Activated CD8-positive, alpha-beta T cell treated with anti-CD3 and anti-CD28 coated beads, Interleukin-2, amount 10 ng/mL, durations not matched to agents 7 days and 5 days (primary cell): ENCODE measurements at regions of chr5 and their contacts with region 1.

Region 1: GRCh38 chr5:138464008-138464387 is 1.3 kb upstream of the EGR1 start:
- DNase-seq: peak; percentile 93
- ATAC-seq: peak; percentile 52
- H3K4me3 Mint-ChIP-seq: peak overlapping the region; percentile 87
- H3K27ac Mint-ChIP-seq: peak overlapping the region; percentile 96
- H3K4me1 Mint-ChIP-seq: peaks cover 42% of the 10 kb centered on the region
- H3K27me3 Mint-ChIP-seq: peaks cover 20% of the 10 kb centered on the region

Region 2: GRCh38 chr5:138449501-138450239 is 14.3 kb before region 1 on chr5:
- CTCF ChIA-PET with region 1: interaction called, 25 read pairs
- POLR2A ChIA-PET with region 1: interaction called, 32 read pairs
- DNase-seq: peak; percentile 83
- ATAC-seq: peak; percentile 95
- H3K4me3 Mint-ChIP-seq: peak overlapping the region; percentile 31
- H3K27ac Mint-ChIP-seq: no peak overlapping the region
- H3K4me1 Mint-ChIP-seq: peaks cover 5% of the 10 kb centered on the region
- H3K27me3 Mint-ChIP-seq: peaks cover 2% of the 10 kb centered on the region

Region 3: DNA sequence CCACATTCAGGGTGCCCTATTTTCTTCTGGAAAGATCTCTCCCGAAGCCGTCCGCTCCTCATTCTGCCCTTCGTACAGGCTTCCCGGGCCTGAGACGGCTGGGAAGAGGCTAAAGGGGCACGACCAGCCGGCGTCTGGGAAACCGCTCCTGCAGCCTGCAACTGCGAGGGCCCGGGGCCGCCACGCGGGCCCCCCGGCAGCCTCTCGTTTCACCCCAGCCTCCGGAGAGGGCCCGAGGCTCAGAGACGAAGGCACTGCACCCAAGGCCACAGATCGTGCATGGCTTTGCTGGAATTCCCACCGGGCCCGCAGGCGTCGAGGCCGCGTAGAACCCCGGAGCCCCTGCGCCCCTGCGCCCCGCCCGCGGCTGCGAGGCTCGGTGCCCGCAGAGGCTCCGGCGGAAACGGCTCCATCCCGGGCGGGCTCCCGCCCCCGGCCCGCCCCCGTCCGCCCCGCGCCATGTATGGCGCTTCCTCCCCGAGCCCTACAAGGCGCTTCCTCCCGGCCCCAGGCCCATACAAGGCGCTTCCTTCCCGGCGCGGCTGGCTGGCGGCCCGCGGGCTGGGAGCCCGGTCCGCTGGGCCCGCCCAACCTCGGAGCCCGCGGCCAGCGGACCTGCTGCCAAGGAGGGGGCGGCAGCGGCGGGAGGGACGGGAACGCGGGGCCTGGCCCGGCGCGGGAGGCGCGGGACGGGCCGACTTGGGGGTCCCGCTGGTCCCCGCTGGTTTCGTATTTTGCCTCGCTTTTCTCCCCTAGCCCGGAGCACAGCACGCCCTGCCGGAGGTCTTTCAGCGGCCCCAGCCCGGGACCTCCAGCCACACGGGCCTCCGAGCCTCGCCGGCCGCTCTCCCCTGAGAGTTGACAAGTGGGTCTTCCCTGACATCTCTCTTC is 27.9 kb after region 1 on chr5:
- CTCF ChIA-PET with region 1: interaction called, 7 read pairs
- POLR2A ChIA-PET with region 1: interaction called, 12 read pairs
- DNase-seq: peak; percentile 89
- ATAC-seq: peak; percentile 100
- H3K4me3 Mint-ChIP-seq: peak overlapping the region; percentile 80
- H3K27ac Mint-ChIP-seq: peak overlapping the region; percentile 70
- H3K4me1 Mint-ChIP-seq: peaks cover 11% of the 10 kb centered on the region
- H3K27me3 Mint-ChIP-seq: peaks cover 27% of the 10 kb centered on the region

Region 4: DNA sequence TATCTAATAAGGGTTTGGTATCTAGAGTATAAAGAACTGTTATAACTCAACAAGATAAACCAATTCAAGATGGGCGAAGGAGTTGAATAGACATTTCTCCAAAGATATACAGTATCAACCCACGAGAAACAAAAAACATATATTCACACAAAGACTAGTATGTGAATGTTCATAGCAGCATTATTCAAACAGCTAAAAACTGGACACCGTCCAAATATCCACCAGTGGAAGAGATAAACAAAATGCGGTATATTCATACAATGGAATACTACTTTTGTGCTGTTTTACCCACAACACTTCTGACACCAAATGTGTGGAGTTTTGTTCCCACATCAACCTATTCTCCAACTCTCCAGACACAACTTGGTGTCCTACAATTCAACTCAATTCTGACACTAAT is 34.4 kb after region 1 on chr5:
- CTCF ChIA-PET with region 1: interaction called, 34 read pairs
- POLR2A ChIA-PET with region 1: interaction called, 12 read pairs
- DNase-seq: no peak
- ATAC-seq: no peak
- H3K4me3 Mint-ChIP-seq: no peak overlapping the region
- H3K27ac Mint-ChIP-seq: no peak overlapping the region
- H3K4me1 Mint-ChIP-seq: no peaks in the 10 kb centered on the region
- H3K27me3 Mint-ChIP-seq: peaks cover 5% of the 10 kb centered on the region

Region 5: DNA sequence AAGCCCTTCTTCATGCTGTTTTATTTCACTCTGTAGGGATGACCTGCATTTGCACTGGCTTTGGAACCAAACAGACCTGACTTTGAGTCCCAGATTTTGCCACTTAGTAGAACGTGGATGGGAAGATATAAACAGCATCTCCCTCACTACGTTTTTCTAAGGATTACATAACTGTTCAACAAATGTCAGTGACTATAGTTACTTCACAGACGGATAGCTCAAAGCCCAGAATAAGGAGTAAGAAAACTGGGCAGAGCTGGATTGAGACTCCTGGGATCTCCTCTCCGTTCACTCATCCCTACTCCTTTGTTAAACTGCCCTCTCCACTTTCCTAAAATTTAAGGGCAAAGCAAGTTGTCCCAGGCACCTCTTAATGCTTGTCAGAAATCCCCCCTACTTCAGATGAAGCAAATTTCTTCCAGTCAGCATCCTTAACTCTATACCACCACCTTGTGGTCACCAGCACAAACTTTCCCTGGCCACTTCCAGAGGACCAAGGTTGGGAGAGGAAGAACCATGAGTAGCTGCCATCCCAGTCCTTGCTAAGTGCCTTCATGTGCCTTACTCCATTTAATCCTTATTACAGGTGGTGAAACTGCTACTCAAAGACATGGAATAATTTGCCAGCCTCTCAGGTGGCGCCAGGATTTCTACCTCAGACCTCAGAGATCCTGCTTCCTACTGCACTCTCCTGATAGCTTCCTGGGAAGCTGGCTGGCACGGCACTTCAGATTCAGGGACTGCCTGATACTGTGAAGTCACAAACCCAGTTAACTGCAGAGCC is 39.7 kb after region 1 on chr5:
- CTCF ChIA-PET with region 1: interaction called, 34 read pairs
- POLR2A ChIA-PET with region 1: interaction called, 3 read pairs
- DNase-seq: peak; percentile 34
- ATAC-seq: peak; percentile 47
- H3K4me3 Mint-ChIP-seq: no peak overlapping the region
- H3K27ac Mint-ChIP-seq: no peak overlapping the region
- H3K4me1 Mint-ChIP-seq: no peaks in the 10 kb centered on the region
- H3K27me3 Mint-ChIP-seq: no peaks in the 10 kb centered on the region

Region 6: GRCh38 chr5:138542956-138543729 is 79.1 kb after region 1 on chr5 and contains the start of gene ETF1:
- CTCF ChIA-PET with region 1: interaction called, 16 read pairs
- POLR2A ChIA-PET with region 1: interaction called, 28 read pairs
- DNase-seq: peak; percentile 100
- ATAC-seq: peak; percentile 90
- H3K4me3 Mint-ChIP-seq: peak within 1 kb of the TSS; percentile 94
- H3K27ac Mint-ChIP-seq: peak within 1 kb of the TSS; percentile 100
- H3K4me1 Mint-ChIP-seq: peaks cover 62% of the 10 kb centered on the region
- H3K27me3 Mint-ChIP-seq: no peaks in the 10 kb centered on the region
- total RNA-seq, gene ETF1: 92.7 to 93.3 TPM

Region 7: GRCh38 chr5:138575194-138576015 is 111.4 kb after region 1 on chr5 and contains the start of gene HSPA9:
- CTCF ChIA-PET with region 1: interaction called, 8 read pairs
- POLR2A ChIA-PET with region 1: interaction called, 19 read pairs
- DNase-seq: peak; percentile 98
- ATAC-seq: peak; percentile 87
- H3K4me3 Mint-ChIP-seq: peak within 1 kb of the TSS; percentile 92
- H3K27ac Mint-ChIP-seq: peak within 1 kb of the TSS; percentile 100
- H3K4me1 Mint-ChIP-seq: peaks cover 35% of the 10 kb centered on the region
- H3K27me3 Mint-ChIP-seq: no peaks in the 10 kb centered on the region
- total RNA-seq, gene HSPA9: 214 to 216 TPM